ENCODE measurements at regions of chr2 and their contacts with region 1.

Region 1: DNA sequence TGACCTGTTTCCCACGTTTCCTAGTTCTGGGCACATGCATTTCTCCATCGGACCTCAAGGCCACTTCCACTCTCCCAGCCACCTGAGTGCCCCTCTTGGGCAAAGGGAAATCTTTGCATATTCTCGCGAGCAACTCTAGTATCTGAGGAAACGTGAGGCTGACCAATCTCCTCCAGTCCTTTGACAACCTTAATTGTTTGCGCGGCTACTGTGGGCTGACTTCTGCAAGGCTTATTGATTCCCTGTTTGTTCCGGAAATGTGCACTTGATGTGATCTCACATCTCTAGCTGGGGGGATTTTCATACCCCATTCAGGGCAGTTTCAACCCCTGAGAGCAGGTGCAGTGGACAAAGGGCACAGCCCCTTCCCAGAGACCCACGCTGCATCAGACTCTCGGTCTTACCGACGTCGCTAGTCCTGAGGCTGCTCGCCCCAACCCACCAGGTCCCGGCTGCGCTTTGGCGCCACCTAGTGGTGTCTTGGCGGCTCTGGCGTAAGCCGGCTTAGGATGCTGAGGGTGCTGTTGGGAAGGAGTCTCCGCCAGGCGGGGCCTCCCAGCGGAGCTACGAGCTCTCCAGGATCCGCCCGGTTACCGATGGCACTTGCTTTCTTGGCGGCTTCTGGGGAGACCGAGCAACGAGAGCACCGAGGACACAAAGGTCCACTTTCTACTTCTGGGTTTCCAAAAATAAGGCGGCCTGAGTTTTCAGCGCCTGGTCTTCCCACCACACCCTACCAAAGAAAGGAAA is 24.8 kb upstream of the SPR start:
- DNase-seq: peak; percentile 85
- ATAC-seq: peak; percentile 99
- H3K4me3 ChIP-seq: peak overlapping the region; percentile 35 to 61
- H3K27ac ChIP-seq: no peak overlapping the region
- H3K4me1 ChIP-seq: 0 out of 2 replicates have a peak, but pooled peaks cover 4% of the 10 kb centered on the region
- H3K27me3 ChIP-seq: peaks cover 9% of the 10 kb centered on the region; the same call in 1 of the 2 replicates
- CTCF ChIP-seq: peak; percentile 99

Region 2: GRCh38 chr2:72289283-72289682 is 573.1 kb before region 1 on chr2:
- CTCF ChIA-PET with region 1: interaction called, 19 read pairs
- POLR2A ChIA-PET with region 1: no interaction called
- in situ Hi-C with region 1: no loop called
- intact Hi-C with region 1: no loop called
- DNase-seq: no peak
- ATAC-seq: no peak
- H3K4me3 ChIP-seq: no peak overlapping the region
- H3K27ac ChIP-seq: no peak overlapping the region
- H3K4me1 ChIP-seq: no peaks in the 10 kb centered on the region
- H3K27me3 ChIP-seq: no peaks in the 10 kb centered on the region
- CTCF ChIP-seq: no peak

Region 3: GRCh38 chr2:72605836-72606442 is 256.5 kb before region 1 on chr2:
- CTCF ChIA-PET with region 1: no interaction called
- POLR2A ChIA-PET with region 1: no interaction called
- in situ Hi-C with region 1: no loop called
- intact Hi-C with region 1: loop called (anchors 10 kb)
- DNase-seq: no peak
- ATAC-seq: no peak
- H3K4me3 ChIP-seq: no peak overlapping the region
- H3K27ac ChIP-seq: no peak overlapping the region
- H3K4me1 ChIP-seq: no peaks in the 10 kb centered on the region
- H3K27me3 ChIP-seq: no peaks in the 10 kb centered on the region
- CTCF ChIP-seq: peak; percentile 67; the same call in 1 of the 2 replicates

Region 4: GRCh38 chr2:72770879-72771461 is 91.4 kb before region 1 on chr2:
- CTCF ChIA-PET with region 1: interaction called, 9 read pairs
- POLR2A ChIA-PET with region 1: no interaction called
- in situ Hi-C with region 1: no loop called
- intact Hi-C with region 1: loop called (anchors 1 kb)
- DNase-seq: no peak
- ATAC-seq: peak; percentile 79; the same call in 1 of the 2 replicates
- H3K4me3 ChIP-seq: no peak overlapping the region
- H3K27ac ChIP-seq: no peak overlapping the region
- H3K4me1 ChIP-seq: no peaks in the 10 kb centered on the region
- H3K27me3 ChIP-seq: no peaks in the 10 kb centered on the region
- CTCF ChIP-seq: peak; percentile 83; the same call in 1 of the 2 replicates

Region 5: GRCh38 chr2:72782520-72782919 is 79.9 kb before region 1 on chr2:
- CTCF ChIA-PET with region 1: interaction called, 13 read pairs
- POLR2A ChIA-PET with region 1: no interaction called
- in situ Hi-C with region 1: no loop called
- intact Hi-C with region 1: no loop called
- DNase-seq: no peak
- ATAC-seq: no peak
- H3K4me3 ChIP-seq: no peak overlapping the region
- H3K27ac ChIP-seq: no peak overlapping the region
- H3K4me1 ChIP-seq: no peaks in the 10 kb centered on the region
- H3K27me3 ChIP-seq: no peaks in the 10 kb centered on the region
- CTCF ChIP-seq: no peak

Region 6: GRCh38 chr2:72822794-72823193 is 39.6 kb before region 1 on chr2:
- CTCF ChIA-PET with region 1: no interaction called
- POLR2A ChIA-PET with region 1: interaction called, 28 read pairs
- in situ Hi-C with region 1: no loop called
- intact Hi-C with region 1: no loop called
- DNase-seq: no peak
- ATAC-seq: no peak
- H3K4me3 ChIP-seq: no peak overlapping the region
- H3K27ac ChIP-seq: no peak overlapping the region
- H3K4me1 ChIP-seq: peaks cover 9% of the 10 kb centered on the region
- H3K27me3 ChIP-seq: no peaks in the 10 kb centered on the region
- CTCF ChIP-seq: no peak

Region 7: DNA sequence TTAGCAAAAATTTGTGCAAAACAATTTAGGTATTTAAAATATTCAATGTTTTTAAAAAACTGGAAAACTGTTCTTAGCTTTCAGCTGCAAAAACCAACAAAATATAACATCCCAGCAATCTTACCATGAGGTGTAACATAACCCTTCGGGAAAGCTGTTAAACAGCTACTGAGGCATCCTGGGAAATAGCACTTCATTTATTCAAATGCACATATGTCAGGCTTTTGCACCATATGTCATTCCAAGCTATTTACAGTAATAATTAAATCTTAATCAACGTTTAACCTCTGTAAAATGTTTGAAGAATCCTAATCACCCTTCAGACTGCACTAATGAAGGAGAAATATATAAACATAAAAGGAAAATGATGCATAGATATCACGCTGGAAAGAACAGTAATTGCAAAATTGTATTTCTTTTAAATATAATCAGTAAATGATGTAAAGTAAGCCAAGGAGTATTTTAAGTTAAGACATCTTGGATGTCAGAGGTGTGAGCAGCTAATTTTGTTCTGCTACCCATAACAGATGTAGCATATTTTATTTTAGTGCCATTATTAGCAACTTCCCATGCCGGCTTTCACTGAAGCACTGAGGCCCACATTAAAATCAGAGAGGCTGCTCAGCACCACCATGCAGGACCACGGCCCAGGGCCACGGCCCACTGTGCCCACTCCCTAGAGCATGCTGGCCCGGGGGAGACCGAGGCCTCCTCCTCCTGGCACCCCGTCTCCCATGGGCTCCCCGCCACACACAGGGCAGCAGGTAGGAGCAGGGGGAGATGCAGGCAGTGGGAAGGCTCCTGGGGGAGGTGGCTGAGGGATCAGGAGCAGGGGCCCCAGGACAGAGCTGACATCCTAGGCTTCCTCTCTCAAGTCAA is 85.8 kb after region 1 on chr2:
- CTCF ChIA-PET with region 1: interaction called, 14 read pairs
- POLR2A ChIA-PET with region 1: no interaction called
- in situ Hi-C with region 1: no loop called
- intact Hi-C with region 1: no loop called
- DNase-seq: no peak
- ATAC-seq: no peak
- H3K4me3 ChIP-seq: no peak overlapping the region
- H3K27ac ChIP-seq: no peak overlapping the region
- H3K4me1 ChIP-seq: no peaks in the 10 kb centered on the region
- H3K27me3 ChIP-seq: no peaks in the 10 kb centered on the region
- CTCF ChIP-seq: no peak